CD8-positive, alpha-beta T cell (primary cell): ENCODE measurements at regions of chr20 and their contacts with region 1.

Region 1: DNA sequence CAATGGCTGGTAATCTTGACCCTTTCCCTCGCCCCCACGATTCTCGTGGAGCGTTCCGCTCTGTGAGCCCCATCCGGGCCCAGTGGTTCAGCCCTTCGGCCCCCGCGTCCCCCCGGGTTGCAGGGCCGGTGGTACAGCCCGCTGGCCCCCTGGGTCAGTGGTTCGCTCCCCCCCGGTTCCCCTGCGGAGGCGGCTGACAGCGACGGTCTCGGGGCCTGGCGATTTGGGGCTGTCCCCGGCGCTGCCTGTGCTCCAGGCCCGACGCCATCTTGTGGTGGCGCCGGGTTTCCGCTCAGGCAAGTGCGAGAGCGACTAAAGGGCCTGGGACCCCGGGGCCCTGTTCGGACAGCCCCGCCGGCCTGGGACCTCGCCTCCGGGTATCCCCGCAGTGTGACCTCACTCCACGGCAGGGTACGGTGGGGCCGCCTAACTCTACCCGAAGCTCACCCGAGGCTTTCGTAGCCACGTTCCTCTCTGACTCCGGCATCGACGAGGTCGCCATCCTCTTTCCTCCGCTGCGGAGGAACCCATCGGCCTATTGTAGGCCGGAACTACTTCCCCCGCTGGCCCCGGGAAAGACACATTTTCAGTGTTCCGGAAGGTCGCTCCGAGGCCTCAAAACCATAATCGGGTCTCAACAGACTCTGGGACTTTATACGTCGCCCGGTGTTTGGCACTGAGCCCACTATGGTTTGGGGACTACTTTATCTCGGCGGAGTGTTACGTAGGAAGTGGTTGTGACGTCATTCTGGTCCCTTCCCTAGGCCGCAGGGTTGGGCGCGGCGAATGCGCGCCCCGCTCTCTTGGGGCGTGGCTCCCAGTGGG is at the start of gene ZNF335:
- DNase-seq: peak; percentile 90 to 98 (median 94)
- ATAC-seq: peak; percentile 83
- H3K4me3 ChIP-seq: peak within 1 kb of the TSS; percentile 100
- H3K4me3 Mint-ChIP-seq: peak within 1 kb of the TSS; percentile 90
- H3K27ac ChIP-seq: peak within 1 kb of the TSS; percentile 100
- H3K27ac Mint-ChIP-seq: peak within 1 kb of the TSS; percentile 100
- H3K4me1 ChIP-seq: peaks cover 27% of the 10 kb centered on the region
- H3K4me1 Mint-ChIP-seq: peaks cover 24% of the 10 kb centered on the region
- H3K27me3 ChIP-seq: no peaks in the 10 kb centered on the region
- H3K27me3 Mint-ChIP-seq: no peaks in the 10 kb centered on the region
- CTCF ChIP-seq: no peak
- total RNA-seq, gene ZNF335: 90.9 to 96.1 TPM

Region 2: DNA sequence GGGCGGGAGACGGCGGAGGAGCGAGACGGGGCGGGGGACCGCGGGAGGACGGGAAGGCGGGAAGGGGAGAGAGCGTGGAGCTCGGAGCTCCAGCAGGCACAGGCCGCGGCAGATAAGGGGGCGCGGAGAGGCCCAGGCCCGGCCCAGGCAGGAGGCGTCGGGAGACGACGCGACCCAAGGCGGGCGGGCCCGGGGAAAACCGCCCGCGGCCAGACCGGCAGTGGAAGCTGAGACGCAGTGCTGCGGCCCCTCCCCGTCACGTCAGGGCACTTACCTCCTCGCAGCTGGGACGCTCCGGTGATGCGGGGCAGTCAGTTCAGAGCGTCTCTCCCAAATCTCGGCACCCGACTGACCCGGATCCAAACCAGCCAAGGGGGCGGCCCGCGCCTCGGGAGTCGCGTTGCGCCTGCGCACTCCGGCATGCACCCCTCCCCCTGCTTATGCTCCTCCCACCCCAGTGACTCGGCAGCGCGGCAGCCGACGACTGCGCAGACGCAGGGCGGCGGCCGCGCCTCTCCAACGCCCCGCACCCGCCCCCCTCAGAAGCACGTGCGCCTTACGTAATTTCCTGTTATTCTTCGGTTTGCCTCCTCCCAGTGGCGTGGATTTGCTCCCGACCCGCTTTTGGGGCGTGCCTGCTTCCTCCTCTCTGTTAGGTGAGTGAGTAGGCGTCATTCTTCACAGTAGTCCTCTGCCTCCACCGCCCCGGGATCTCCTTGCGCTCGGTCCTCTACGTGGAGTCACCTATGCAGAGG is 1761.3 kb before region 1 on chr20 and contains the start of gene OSER1:
- CTCF ChIA-PET with region 1: no interaction called
- POLR2A ChIA-PET with region 1: no interaction called
- intact Hi-C with region 1: loop called in 1 of 2 experiments (anchors 10 kb)
- DNase-seq: peak; percentile 97 to 99 (median 98)
- ATAC-seq: peak; percentile 83
- H3K4me3 ChIP-seq: peak within 1 kb of the TSS; percentile 78 to 91
- H3K4me3 Mint-ChIP-seq: peak within 1 kb of the TSS; percentile 96
- H3K27ac ChIP-seq: peak within 1 kb of the TSS; percentile 93 to 96
- H3K27ac Mint-ChIP-seq: peak within 1 kb of the TSS; percentile 99
- H3K4me1 ChIP-seq: peaks cover 43% of the 10 kb centered on the region
- H3K4me1 Mint-ChIP-seq: peaks cover 73% of the 10 kb centered on the region
- H3K27me3 ChIP-seq: no peaks in the 10 kb centered on the region
- H3K27me3 Mint-ChIP-seq: no peaks in the 10 kb centered on the region
- CTCF ChIP-seq: no peak
- total RNA-seq, gene OSER1: 201 to 204 TPM

Region 3: DNA sequence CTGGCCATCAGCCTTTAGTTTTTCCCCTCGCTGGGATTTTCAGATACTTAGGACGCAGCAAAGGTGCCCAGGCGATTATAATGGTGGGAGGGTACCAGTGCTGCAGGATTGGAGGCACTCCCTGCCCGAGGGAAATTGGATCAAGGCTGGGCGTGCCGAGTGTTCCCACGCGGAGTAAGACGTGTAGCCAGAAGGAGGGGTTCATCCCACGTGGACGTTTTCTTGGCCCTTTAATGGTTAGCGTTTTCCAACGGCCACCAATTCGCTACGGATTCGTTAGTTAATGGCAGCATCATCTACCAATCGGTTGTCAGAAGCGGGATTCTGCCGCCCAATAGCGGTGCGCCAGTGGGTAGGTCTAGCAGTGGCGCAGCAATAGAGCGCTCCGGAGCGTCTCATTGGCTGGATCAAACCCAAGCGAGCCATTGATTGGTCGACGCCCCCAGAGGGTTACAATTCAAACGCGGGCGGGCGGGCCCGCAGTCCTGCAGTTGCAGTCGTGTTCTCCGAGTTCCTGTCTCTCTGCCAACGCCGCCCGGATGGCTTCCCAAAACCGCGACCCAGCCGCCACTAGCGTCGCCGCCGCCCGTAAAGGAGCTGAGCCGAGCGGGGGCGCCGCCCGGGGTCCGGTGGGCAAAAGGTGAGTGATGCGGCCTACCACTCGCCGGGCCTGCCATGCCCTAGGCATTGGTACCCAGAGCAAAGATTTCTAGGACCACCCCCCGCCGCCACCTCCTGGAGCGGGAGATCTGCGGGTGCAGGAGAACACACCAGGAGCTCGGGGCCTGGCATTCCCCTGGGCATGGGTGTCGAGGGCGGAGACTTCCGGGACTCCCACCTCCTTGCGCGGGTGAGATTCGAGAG is 159.5 kb before region 1 on chr20 and contains the start of gene UBE2C:
- CTCF ChIA-PET with region 1: interaction called, 4 read pairs
- POLR2A ChIA-PET with region 1: no interaction called
- intact Hi-C with region 1: loop called (anchors 1 to 5 kb)
- DNase-seq: peak; percentile 87 to 98 (median 92)
- ATAC-seq: peak; percentile 99
- H3K4me3 ChIP-seq: peak within 1 kb of the TSS; percentile 62 to 67
- H3K4me3 Mint-ChIP-seq: peak within 1 kb of the TSS; percentile 80
- H3K27ac ChIP-seq: peak within 1 kb of the TSS in 1 of 2 experiments; percentile 51
- H3K27ac Mint-ChIP-seq: peak within 1 kb of the TSS; percentile 77
- H3K4me1 ChIP-seq: peaks cover 10% of the 10 kb centered on the region
- H3K4me1 Mint-ChIP-seq: peaks cover 10% of the 10 kb centered on the region
- H3K27me3 ChIP-seq: no peaks in the 10 kb centered on the region
- H3K27me3 Mint-ChIP-seq: no peaks in the 10 kb centered on the region
- CTCF ChIP-seq: no peak
- total RNA-seq, gene UBE2C: 0.60 TPM in 1 of 2 experiments, not detected in the other

Region 4: DNA sequence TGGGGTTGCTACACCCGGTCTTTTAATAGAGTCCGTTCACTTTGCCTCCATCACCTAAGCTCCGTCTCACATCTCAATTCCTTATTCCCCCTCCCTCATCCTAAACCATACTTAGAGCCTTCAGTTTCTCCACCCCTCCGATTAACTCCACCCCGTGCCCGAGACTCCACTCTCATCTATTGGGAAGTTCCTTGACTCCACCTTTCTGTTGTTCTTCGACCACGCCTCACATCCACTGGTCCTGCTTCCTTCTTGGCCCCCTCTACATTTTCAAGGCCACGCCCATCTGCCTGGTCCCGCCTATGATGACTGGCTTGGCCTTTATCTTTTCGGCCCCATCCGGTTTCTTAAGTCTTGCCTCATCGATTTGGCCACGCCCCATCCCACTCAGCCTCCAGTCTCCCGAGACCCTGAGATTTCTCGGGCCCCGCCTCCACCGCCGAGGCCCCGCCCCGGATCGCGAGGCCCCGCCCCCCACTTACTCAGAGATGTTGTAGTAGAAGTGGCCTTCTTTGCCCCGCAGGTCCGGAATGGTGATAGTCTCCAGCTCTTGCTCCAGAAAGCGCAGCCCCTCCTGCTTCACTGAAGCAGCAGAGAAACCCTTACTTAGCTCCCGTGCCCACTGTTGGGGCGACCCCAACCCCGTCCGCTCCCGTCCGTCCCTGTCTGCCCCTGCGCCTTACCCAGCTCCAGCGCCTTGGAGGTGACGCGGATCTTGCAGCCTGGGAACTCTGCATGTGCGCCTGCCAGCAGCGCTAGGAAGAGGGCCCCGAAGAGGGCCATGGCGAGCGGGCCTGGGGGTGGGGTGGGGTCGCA is 61.0 kb before region 1 on chr20:
- CTCF ChIA-PET with region 1: interaction called, 5 read pairs
- POLR2A ChIA-PET with region 1: no interaction called
- intact Hi-C with region 1: loop called (anchors 1 kb)
- DNase-seq: peak; percentile 78 to 93 (median 88)
- ATAC-seq: peak; percentile 95
- H3K4me3 ChIP-seq: peak overlapping the region; percentile 53 to 75
- H3K4me3 Mint-ChIP-seq: peak overlapping the region; percentile 89
- H3K27ac ChIP-seq: no peak overlapping the region
- H3K27ac Mint-ChIP-seq: peak overlapping the region; percentile 14
- H3K4me1 ChIP-seq: peaks cover 17% of the 10 kb centered on the region
- H3K4me1 Mint-ChIP-seq: peaks cover 16% of the 10 kb centered on the region
- H3K27me3 ChIP-seq: peaks cover 0 to 5% of the 10 kb centered on the region in 2 experiments
- H3K27me3 Mint-ChIP-seq: peaks cover 15% of the 10 kb centered on the region
- CTCF ChIP-seq: no peak

Region 5: GRCh38 chr20:45987108-45987780 is 15.4 kb after region 1 on chr20:
- CTCF ChIA-PET with region 1: interaction called, 15 read pairs
- POLR2A ChIA-PET with region 1: interaction called, 5 read pairs
- intact Hi-C with region 1: no loop called
- DNase-seq: peak; percentile 55 to 84 (median 81)
- ATAC-seq: peak; percentile 99
- H3K4me3 ChIP-seq: no peak overlapping the region
- H3K4me3 Mint-ChIP-seq: no peak overlapping the region
- H3K27ac ChIP-seq: no peak overlapping the region
- H3K27ac Mint-ChIP-seq: no peak overlapping the region
- H3K4me1 ChIP-seq: peaks cover 6% of the 10 kb centered on the region
- H3K4me1 Mint-ChIP-seq: no peaks in the 10 kb centered on the region
- H3K27me3 ChIP-seq: no peaks in the 10 kb centered on the region
- H3K27me3 Mint-ChIP-seq: peaks cover 15% of the 10 kb centered on the region
- CTCF ChIP-seq: peak; percentile 94

Region 6: DNA sequence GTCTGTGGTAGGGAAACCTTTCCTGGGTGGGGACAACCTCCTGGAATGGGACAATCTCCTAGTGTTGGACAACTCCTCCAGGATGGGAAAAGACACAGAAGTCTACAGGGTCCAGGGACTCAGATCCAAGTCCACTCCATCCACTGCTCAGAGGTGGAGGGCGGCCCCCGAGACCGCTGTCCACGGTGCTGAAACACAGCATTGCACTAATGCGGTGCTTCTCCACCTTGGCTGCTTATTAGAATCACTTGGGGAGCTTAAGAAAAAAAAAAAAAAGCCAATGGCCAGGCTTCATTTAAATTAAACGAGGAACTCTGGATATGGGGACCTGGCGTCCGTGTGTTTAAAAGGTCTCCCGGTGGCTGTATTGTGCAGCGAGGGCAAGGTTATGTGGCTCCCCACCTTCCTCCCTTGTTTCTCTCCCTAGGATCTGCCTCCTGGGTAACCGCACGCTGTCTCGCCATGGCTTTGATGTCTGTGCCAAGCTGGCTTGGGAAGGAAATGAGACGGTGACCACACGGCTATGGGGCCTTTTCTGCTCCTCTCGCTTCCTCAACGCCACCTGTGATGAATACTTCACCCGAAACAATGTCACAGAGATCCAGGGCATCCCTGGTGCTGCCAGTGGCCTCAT is 69.1 kb after region 1 on chr20:
- CTCF ChIA-PET with region 1: no interaction called
- POLR2A ChIA-PET with region 1: no interaction called
- intact Hi-C with region 1: no loop called
- DNase-seq: peak in 8 of 9 experiments; percentile 10 to 55 (median 45)
- ATAC-seq: peak; percentile 62
- H3K4me3 ChIP-seq: no peak overlapping the region
- H3K4me3 Mint-ChIP-seq: no peak overlapping the region
- H3K27ac ChIP-seq: no peak overlapping the region
- H3K27ac Mint-ChIP-seq: no peak overlapping the region
- H3K4me1 ChIP-seq: no peaks in the 10 kb centered on the region
- H3K4me1 Mint-ChIP-seq: no peaks in the 10 kb centered on the region
- H3K27me3 ChIP-seq: peaks cover 0 to 4% of the 10 kb centered on the region in 2 experiments
- H3K27me3 Mint-ChIP-seq: peaks cover 40% of the 10 kb centered on the region
- CTCF ChIP-seq: no peak

Region 7: DNA sequence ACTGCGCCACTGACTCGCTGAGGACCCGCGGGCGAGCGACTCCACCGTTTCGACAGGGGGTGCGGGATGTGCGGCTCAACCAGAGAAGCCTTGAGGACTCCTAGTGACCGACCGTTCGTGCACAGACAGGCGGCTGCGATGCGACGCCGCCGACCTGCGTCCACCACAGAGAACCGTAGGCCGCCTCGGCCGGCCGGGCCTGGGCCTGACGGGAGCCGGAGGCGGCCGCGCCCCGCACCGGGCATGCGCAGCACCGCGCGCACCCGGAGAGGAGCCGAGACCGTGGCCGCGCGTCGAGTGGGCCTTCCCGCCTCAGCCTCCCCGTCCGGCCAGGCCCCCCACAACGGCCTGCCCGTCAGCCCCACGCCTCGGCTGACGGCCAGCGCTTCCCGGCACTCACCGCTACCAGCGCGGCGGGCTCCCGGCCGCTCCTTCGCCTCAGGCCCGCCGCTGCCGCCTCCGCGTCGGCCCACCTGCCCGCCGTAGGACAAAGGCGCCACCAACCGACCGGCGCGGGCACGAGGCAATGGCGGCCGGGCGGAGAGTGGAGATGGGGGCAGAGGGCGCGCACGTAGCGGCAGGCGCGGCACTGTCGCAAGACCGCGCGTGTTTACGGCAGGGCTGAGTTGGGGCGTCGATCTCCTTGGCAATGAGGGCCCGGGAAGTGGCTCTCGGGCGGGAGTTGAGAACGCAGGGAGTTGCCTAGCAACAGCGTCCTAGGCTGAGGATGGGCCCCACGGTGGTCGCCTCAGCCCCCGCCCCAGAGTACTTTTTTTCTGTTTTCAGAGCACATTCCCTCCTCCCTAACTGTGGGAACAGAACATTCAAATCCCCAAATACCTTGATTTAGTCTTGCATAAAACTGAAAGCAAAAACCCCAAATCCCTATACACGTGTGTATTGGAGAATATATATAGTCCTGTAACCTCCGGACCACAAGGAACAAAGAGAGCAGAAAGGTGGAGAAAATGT is 117.8 kb after region 1 on chr20 and contains the start of gene NCOA5:
- CTCF ChIA-PET with region 1: no interaction called
- POLR2A ChIA-PET with region 1: no interaction called
- intact Hi-C with region 1: loop called (anchors 1 kb)
- DNase-seq: peak; percentile 89 to 96 (median 94)
- ATAC-seq: peak; percentile 93
- H3K4me3 ChIP-seq: peak within 1 kb of the TSS; percentile 84 to 86
- H3K4me3 Mint-ChIP-seq: peak within 1 kb of the TSS; percentile 89
- H3K27ac ChIP-seq: peak within 1 kb of the TSS; percentile 80 to 85
- H3K27ac Mint-ChIP-seq: peak within 1 kb of the TSS; percentile 87
- H3K4me1 ChIP-seq: peaks cover 43% of the 10 kb centered on the region
- H3K4me1 Mint-ChIP-seq: peaks cover 50% of the 10 kb centered on the region
- H3K27me3 ChIP-seq: no peaks in the 10 kb centered on the region
- H3K27me3 Mint-ChIP-seq: no peaks in the 10 kb centered on the region
- CTCF ChIP-seq: no peak
- total RNA-seq, gene NCOA5: 9.6 to 11.7 TPM

Region 8: DNA sequence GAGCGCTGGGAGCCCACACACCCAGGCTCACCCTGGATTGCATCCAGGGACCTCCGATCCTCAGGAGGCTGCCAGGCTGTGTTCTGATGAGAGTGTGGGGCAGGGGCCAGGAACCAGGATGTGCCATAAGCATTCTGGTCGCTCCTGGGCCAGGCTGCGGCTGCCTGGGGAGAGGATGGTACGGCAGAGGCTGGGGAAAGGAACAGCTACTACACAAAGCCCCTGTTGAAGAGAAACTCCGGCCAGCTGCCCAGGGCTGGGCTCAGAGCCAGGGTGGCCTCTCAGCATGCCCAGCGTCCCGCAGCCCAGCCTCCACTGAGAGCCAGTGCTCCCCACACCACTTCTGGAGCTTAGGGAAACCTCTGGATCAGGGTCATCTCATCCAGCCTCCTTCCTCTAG is 600.3 kb after region 1 on chr20:
- CTCF ChIA-PET with region 1: no interaction called
- POLR2A ChIA-PET with region 1: no interaction called
- intact Hi-C with region 1: no loop called
- DNase-seq: no peak
- ATAC-seq: no peak
- H3K4me3 ChIP-seq: no peak overlapping the region
- H3K4me3 Mint-ChIP-seq: no peak overlapping the region
- H3K27ac ChIP-seq: no peak overlapping the region
- H3K27ac Mint-ChIP-seq: no peak overlapping the region
- H3K4me1 ChIP-seq: no peaks in the 10 kb centered on the region
- H3K4me1 Mint-ChIP-seq: no peaks in the 10 kb centered on the region
- H3K27me3 ChIP-seq: no peaks in the 10 kb centered on the region
- H3K27me3 Mint-ChIP-seq: peaks cover 10% of the 10 kb centered on the region
- CTCF ChIP-seq: no peak